Lower leg skin (tissue), 4 donors: ENCODE measurements at regions of chr22 and their contacts with region 1.

Region 1: DNA sequence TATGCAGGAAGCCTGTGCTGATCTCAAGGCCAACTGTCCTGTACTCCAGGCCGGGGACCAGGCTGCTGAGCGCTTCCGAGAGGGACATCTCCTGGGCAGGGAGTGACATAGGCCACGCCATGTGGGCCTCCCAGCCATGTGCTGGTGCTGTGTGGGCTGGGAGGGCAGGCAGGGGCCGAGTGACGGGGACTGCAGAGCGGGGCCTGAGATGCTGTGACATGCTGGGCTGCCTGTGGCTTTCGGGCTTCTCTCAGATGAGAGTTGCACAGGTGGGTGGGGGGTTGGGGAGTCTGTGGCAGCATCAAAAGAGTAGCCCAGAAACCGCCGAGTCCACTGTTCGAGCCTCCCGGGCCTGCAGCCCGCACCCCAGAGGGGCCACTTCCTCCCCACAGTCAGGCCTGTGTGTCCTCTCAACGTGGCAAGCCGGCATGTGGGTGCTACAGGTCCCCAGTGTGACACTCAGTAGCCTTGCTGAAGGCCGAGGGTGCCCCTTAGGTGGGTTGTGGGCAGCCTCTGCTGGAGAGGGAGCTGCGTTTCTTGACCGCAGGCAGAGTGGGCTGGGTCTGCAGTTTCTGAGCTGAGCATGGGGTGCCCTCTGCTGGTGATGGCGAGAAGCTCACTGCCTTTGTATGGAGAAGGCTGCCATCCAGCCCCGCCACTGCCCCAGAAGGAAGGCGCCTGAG is 101.2 kb downstream of the BCR start:
- DNase-seq: peak; percentile 83 to 96
- H3K4me3 ChIP-seq: no peak overlapping the region
- CTCF ChIP-seq: peak in 1 of 3 donors; percentile 88
- POLR2A ChIP-seq: no peak

Region 2: DNA sequence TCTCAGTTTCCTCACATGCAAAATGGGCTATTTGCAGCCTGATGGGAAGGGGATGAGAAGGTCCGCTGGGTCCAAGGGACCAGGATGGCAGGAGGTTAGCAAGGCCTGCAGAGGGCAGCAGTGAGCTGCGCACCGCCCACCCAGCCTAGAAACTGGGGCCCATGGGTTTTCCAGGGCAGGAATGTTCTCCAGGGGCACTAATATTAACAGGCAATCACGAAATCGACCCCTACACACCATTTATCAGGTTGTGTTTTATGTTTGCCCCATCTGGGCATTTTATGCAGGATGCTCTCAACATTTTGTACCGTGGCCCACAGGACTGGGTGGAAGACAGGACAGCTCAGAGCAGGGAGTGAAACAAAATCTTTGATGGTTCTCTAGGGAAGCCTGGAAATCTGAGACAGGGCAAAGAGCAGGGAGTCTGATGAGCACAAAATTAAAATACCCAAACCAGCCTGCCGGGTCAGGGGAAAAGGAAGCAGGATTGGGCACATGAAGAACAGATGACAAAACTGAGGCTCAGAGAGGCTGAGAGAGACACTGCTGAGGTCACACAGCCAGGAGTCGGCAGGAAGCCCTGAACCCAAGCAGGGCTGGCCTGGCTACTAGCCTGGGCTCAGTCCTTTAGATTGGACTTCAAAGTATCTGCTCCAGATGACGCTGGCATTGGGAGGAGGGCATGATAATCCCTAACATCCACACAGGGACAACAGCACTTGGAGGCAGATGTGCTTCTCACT is 102.9 kb before region 1 on chr22:
- intact Hi-C with region 1: loop called (anchors 2 kb)
- DNase-seq: peak; percentile 37 to 92
- H3K4me3 ChIP-seq: no peak overlapping the region
- CTCF ChIP-seq: peak in 1 of 3 donors; percentile 91
- POLR2A ChIP-seq: no peak